Ovary (tissue), 10 donors: ENCODE measurements at regions of chr9 and their contacts with region 1.

Region 1: DNA sequence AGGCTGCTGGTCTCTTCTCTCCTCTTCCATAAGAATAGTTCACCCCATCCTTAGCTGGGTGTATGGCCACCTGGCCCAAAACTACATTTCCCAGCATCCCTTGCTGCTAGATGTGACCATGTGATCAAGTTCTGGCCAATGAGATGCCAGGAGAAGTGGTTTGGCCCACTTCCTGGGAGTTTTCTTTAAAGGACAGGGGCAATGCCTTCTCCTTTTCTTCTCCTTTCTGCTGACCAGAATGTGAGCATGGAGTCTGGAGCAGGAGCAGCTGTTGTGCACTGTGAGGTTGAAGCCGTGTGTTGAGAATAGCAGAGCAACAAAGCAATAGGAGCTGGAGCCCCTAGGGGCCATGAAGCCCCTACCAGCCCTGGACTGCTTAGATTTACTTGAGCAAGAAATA is 36.8 kb downstream of the C9orf50 start:
- DNase-seq: peak; percentile 64 to 80 (median 69)
- H3K4me3 ChIP-seq: no peak overlapping the region
- H3K27ac ChIP-seq: no peak overlapping the region
- H3K4me1 ChIP-seq: peaks cover 7% of the 10 kb centered on the region
- H3K27me3 ChIP-seq: no peaks in the 10 kb centered on the region
- CTCF ChIP-seq: no peak
- EP300 ChIP-seq: no peak
- POLR2A ChIP-seq: no peak

Region 2: GRCh38 chr9:129394061-129394885 is 189.9 kb before region 1 on chr9:
- intact Hi-C with region 1: loop called in 1 of 4 experiments (anchors 10 kb)
- DNase-seq: peak in 2 of 5 donors; percentile 28 to 31
- H3K4me3 ChIP-seq: no peak overlapping the region
- H3K27ac ChIP-seq: no peak overlapping the region
- H3K4me1 ChIP-seq: no peaks in the 10 kb centered on the region
- H3K27me3 ChIP-seq: no peaks in the 10 kb centered on the region
- CTCF ChIP-seq: no peak
- EP300 ChIP-seq: no peak
- POLR2A ChIP-seq: no peak